Caco-2 (cell line): ENCODE measurements at regions of chr15 and their contacts with region 1.

Region 1: DNA sequence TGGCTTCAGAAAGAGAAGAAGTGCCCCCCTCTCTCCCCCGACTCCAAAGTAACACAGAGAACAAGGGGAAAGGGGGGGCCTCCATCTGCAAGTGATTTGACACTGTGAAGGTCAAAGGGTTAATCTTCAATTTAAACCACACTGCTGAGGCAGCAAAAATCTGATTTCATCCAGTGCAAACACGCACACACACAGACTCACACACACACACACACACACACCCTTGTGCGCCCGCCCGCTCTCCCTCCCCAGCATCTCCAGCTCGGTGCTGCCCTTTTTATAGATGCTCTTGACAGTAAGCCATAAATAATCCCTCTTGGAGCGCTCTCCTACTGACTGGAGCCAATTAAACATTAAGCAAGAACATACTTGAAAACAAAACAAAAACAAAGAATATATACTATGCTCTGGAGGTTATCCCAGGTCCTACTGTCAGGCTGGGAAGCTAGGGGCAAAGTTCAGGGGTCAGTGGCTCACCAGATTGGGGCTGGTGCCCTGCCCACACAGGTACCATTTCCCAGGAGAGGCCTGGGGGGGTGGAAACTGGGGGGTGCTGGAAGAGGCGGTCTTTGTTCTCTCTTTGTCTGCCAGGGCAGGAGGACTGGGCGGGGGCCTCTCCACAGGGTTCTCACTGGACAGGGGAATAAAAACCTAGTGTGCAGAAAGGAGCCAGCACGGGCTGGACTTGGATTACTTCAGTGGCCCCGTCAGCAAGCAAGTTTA is 16.3 kb downstream of the BMF start:
- DNase-seq: peak; percentile 58 to 78
- H3K4me3 ChIP-seq: no peak overlapping the region
- H3K4me3 Mint-ChIP-seq: peak overlapping the region; percentile 31
- H3K27ac Mint-ChIP-seq: peak overlapping the region; percentile 86
- H3K4me1 ChIP-seq: peaks cover 84% of the 10 kb centered on the region
- H3K4me1 Mint-ChIP-seq: peaks cover 53% of the 10 kb centered on the region
- H3K27me3 ChIP-seq: no peaks in the 10 kb centered on the region
- H3K27me3 Mint-ChIP-seq: no peaks in the 10 kb centered on the region
- CTCF ChIP-seq: no peak

Region 2: DNA sequence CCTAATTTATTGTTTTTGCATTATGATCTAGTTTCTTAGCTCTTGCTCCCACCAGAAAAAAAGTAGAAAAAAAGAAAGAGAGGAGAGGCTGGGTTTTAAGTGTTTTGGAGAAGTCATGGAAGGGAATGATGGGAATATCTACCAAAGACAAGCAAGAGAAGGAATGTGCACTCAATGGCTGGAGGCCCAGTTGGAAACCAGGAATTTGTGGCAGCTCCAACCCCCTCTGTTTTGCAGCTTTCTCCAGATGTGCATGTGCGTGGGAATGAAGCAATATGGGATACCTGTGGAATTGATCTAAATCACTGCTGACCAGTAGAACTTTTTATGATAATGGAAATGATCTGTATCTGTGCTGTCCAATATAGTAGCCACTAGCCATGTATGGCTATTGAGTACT is 131.4 kb before region 1 on chr15:
- CTCF ChIA-PET with region 1: no interaction called
- POLR2A ChIA-PET with region 1: no interaction called
- intact Hi-C with region 1: no loop called
- DNase-seq: no peak
- H3K4me3 ChIP-seq: no peak overlapping the region
- H3K4me3 Mint-ChIP-seq: no peak overlapping the region
- H3K27ac Mint-ChIP-seq: no peak overlapping the region
- H3K4me1 ChIP-seq: no peaks in the 10 kb centered on the region
- H3K4me1 Mint-ChIP-seq: no peaks in the 10 kb centered on the region
- H3K27me3 ChIP-seq: no peaks in the 10 kb centered on the region
- H3K27me3 Mint-ChIP-seq: no peaks in the 10 kb centered on the region
- CTCF ChIP-seq: no peak

Region 3: DNA sequence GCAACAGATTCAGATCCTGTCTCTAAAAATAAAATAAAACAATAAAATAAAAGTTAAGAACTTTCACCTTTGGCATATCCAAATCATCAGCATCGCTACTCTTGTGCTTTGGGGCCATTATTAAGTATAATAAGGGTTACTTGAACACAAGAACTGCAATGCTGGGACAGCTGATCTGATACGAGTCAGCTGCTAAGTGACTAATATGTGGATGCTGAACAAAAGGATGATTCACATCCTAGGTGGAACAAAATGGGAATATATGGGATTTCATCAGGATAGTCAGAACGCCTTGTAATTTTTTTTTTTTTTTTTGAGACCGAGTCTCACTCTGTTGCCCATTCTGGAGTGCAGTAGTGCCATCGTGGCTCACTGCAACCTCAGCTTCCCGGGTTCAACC is 98.2 kb after region 1 on chr15:
- CTCF ChIA-PET with region 1: no interaction called
- POLR2A ChIA-PET with region 1: interaction called, 19 read pairs
- intact Hi-C with region 1: no loop called
- DNase-seq: no peak
- H3K4me3 ChIP-seq: no peak overlapping the region
- H3K4me3 Mint-ChIP-seq: no peak overlapping the region
- H3K27ac Mint-ChIP-seq: no peak overlapping the region
- H3K4me1 ChIP-seq: no peaks in the 10 kb centered on the region
- H3K4me1 Mint-ChIP-seq: no peaks in the 10 kb centered on the region
- H3K27me3 ChIP-seq: no peaks in the 10 kb centered on the region
- H3K27me3 Mint-ChIP-seq: no peaks in the 10 kb centered on the region
- CTCF ChIP-seq: no peak

Region 4: DNA sequence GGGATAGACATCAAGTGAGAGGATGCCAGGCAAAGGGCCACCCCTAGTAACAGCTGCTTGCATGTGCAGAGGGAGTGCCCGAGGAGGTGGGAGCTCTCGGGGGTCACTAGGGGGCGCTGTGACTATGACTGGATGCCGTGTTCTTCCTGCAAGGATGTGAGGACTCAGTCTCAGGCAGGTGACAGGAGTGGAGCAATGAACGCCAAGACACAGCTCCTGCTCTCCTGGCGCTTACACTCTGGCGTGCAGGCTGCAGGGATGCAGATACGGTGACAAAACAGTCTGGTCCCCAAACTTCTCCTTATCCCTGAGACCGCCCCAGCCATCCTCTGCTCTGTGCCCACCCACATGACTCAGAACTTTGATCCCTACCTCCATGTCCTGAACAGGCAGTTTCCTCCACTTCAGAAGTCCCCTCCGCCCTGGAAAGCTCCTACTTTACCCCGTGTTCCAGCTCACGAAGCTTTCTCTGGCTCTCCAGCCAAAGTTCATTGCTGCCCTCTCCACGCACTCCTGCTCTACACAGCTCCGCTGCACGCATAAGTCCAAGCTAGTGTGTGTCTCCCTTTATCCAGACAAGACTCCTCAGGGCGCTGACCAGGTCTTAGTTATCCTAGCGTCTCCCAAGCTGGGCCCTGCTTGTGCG is 766.9 kb after region 1 on chr15:
- CTCF ChIA-PET with region 1: no interaction called
- POLR2A ChIA-PET with region 1: no interaction called
- intact Hi-C with region 1: no loop called
- DNase-seq: peak; percentile 82 to 87
- H3K4me3 ChIP-seq: no peak overlapping the region
- H3K4me3 Mint-ChIP-seq: no peak overlapping the region
- H3K27ac Mint-ChIP-seq: peak overlapping the region; percentile 80
- H3K4me1 ChIP-seq: peaks cover 32% of the 10 kb centered on the region
- H3K4me1 Mint-ChIP-seq: peaks cover 43% of the 10 kb centered on the region
- H3K27me3 ChIP-seq: no peaks in the 10 kb centered on the region
- H3K27me3 Mint-ChIP-seq: no peaks in the 10 kb centered on the region
- CTCF ChIP-seq: peak; percentile 76 to 81